GM23248 (cell line): ENCODE measurements at regions of chr2 and their contacts with region 1.

Region 1: DNA sequence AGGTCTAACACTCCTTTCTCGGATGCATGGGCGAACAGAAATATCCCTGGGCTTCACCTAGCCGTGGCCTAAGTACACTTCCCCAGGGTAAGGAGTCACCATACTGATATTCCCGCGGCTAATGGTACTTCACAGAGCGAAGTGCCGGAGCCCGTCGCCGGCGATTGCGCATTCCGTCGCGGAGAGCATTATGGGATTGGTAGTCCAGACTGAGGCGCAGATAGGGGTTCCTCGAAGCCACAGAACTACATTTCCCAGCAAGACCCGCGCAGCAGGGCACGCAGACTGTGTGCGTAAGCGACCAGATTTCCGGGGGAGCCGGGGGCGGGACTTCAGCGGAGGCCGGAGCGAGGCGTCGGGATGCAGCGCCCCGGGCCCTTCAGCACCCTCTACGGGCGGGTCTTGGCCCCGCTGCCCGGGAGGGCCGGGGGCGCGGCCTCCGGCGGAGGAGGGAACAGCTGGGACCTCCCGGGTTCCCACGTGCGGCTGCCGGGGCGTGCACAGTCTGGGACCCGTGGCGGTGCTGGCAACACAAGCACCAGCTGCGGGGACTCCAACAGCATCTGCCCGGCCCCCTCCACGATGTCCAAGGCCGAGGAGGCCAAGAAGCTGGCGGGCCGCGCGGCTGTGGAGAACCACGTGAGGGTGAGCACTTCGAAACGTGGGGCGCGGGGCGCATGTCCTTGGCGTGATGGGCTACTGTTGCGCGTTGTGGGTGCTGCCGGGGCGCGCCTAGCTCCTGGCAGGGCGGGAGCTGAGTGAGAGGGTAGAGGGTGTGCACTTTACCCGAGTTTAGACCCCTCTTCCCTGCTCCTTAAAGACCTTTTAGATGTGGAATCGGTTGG is at the start of gene RPIA:
- DNase-seq: peak; percentile 99
- H3K4me3 ChIP-seq: peak within 1 kb of the TSS; percentile 89
- H3K27ac ChIP-seq: peak within 1 kb of the TSS; percentile 45
- H3K4me1 ChIP-seq: peaks cover 7% of the 10 kb centered on the region
- H3K27me3 ChIP-seq: no peaks in the 10 kb centered on the region
- total RNA-seq, gene RPIA: 3.0 and 5.8 TPM in 2 replicates

Region 2: GRCh38 chr2:88187038-88187676 is 504.4 kb before region 1 on chr2:
- in situ Hi-C with region 1: loop called (anchors 25 kb)
- DNase-seq: peak; percentile 69
- H3K4me3 ChIP-seq: no peak overlapping the region
- H3K27ac ChIP-seq: no peak overlapping the region
- H3K4me1 ChIP-seq: no peaks in the 10 kb centered on the region
- H3K27me3 ChIP-seq: no peaks in the 10 kb centered on the region

Region 3: GRCh38 chr2:88351249-88351601 is 340.3 kb before region 1 on chr2:
- in situ Hi-C with region 1: no loop called
- DNase-seq: no peak
- H3K4me3 ChIP-seq: no peak overlapping the region
- H3K27ac ChIP-seq: no peak overlapping the region
- H3K4me1 ChIP-seq: no peaks in the 10 kb centered on the region
- H3K27me3 ChIP-seq: peaks cover 18% of the 10 kb centered on the region

Region 4: DNA sequence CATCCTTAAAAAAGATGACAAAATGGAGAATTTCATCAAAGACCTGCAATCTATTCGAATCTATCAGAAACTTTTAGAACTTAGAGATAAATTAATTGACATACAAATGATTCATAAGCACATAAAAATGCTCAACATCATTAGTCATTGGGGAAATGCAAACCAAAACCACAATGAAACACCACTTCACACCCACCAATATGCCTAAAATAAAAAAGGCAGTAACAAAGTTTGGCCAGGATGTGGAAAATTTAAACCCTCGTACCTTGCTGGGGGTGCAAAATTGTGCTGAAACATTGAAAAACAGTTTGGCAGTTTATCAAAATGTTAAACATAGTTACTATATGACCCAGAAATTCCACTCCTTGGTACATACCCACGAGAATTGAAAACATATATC is 52.8 kb before region 1 on chr2:
- in situ Hi-C with region 1: no loop called
- DNase-seq: peak; percentile 62
- H3K4me3 ChIP-seq: no peak overlapping the region
- H3K27ac ChIP-seq: no peak overlapping the region
- H3K4me1 ChIP-seq: peaks cover 6% of the 10 kb centered on the region
- H3K27me3 ChIP-seq: peaks cover 56% of the 10 kb centered on the region

Region 5: GRCh38 chr2:88950010-88950409 is 258.4 kb after region 1 on chr2:
- in situ Hi-C with region 1: no loop called
- DNase-seq: peak; percentile 9
- H3K4me3 ChIP-seq: no peak overlapping the region
- H3K27ac ChIP-seq: no peak overlapping the region
- H3K4me1 ChIP-seq: no peaks in the 10 kb centered on the region
- H3K27me3 ChIP-seq: peaks cover 8% of the 10 kb centered on the region; the same call in 1 of the 2 replicates